ENCODE measurements at regions of chr1 and their contacts with region 1.

Region 1: DNA sequence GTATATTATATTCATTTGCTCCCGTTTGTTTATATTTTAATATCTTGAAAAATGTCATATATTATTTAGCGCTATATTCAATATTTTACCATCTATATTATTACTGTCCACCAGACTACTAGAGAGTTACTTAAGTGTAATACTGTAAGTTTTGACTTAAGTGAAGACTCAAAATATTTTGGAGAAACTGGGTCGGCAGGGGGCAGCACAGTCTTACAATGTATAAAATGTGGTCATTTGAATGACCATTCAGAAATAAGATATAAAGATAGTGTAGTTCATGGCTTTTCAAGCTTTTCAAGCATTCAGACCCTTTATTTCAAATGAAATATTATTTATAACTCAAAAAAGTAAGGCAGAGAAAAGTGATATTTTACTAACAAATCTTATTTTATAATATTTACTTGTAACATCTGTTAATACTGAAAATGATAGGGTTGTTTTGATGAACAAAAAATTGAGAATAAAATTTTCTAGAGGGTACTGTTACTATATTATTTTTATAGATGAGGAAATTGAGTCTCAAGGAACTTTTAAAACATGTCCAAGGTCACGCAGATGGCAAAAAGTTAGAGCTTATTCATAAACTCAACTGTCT is 89.0 kb upstream of the SERTAD4 start:
- DNase-seq: peak; percentile 62 to 88 (median 75)
- H3K4me3 ChIP-seq: no peak overlapping the region
- H3K27ac ChIP-seq: no peak overlapping the region
- H3K4me1 ChIP-seq: no peaks in the 10 kb centered on the region
- H3K27me3 ChIP-seq: no peaks in the 10 kb centered on the region
- CTCF ChIP-seq: peak; percentile 48

Region 2: GRCh38 chr1:209784265-209785169 is 359.0 kb before region 1 on chr1 and contains the start of gene C1orf74:
- intact Hi-C with region 1: no loop called
- DNase-seq: peak; percentile 99 to 100 (median 100)
- H3K4me3 ChIP-seq: peak within 1 kb of the TSS; percentile 73 to 90 (median 90)
- H3K27ac ChIP-seq: peak within 1 kb of the TSS; percentile 85 to 86
- H3K4me1 ChIP-seq: peaks cover 0 to 29% (median 26%) of the 10 kb centered on the region in 3 donors
- H3K27me3 ChIP-seq: no peaks in the 10 kb centered on the region
- CTCF ChIP-seq: no peak
- total RNA-seq, gene C1orf74: 2.5 TPM

Region 3: GRCh38 chr1:210311726-210312493 is 168.3 kb after region 1 on chr1:
- intact Hi-C with region 1: loop called (anchors 5 kb)
- DNase-seq: no peak
- H3K4me3 ChIP-seq: peak overlapping the region in 2 of 3 donors; percentile 1 to 63
- H3K27ac ChIP-seq: peak overlapping the region; percentile 43 to 81
- H3K4me1 ChIP-seq: peaks cover 0 to 10% (median 0%) of the 10 kb centered on the region in 3 donors
- H3K27me3 ChIP-seq: no peaks in the 10 kb centered on the region
- CTCF ChIP-seq: no peak

Measured in kidney (tissue), 22 donors.